PC-3 (cell line): ENCODE measurements at regions of chr21 and their contacts with region 1.

Region 1: GRCh38 chr21:44692798-44693512 is 4.0 kb upstream of the KRTAP10-12 start:
- DNase-seq: no peak
- ATAC-seq: no peak
- H3K4me3 ChIP-seq: no peak overlapping the region
- H3K27ac ChIP-seq: no peak overlapping the region
- H3K4me1 ChIP-seq: no peaks in the 10 kb centered on the region
- H3K27me3 ChIP-seq: no peaks in the 10 kb centered on the region
- CTCF ChIP-seq: no peak

Region 2: GRCh38 chr21:44596068-44596725 is 96.8 kb before region 1 on chr21:
- CTCF ChIA-PET with region 1: no interaction called
- POLR2A ChIA-PET with region 1: interaction called, 7 read pairs
- intact Hi-C with region 1: loop called (anchors 1 kb)
- DNase-seq: peak; percentile 88
- ATAC-seq: peak; percentile 99
- H3K4me3 ChIP-seq: 0 out of 2 replicates have a peak overlapping the region, but pooled peaks have one; percentile 16
- H3K27ac ChIP-seq: no peak overlapping the region
- H3K4me1 ChIP-seq: peaks cover 12% of the 10 kb centered on the region
- H3K27me3 ChIP-seq: no peaks in the 10 kb centered on the region
- CTCF ChIP-seq: no peak

Region 3: GRCh38 chr21:44637018-44637850 is 55.7 kb before region 1 on chr21 and contains the start of gene KRTAP10-10:
- CTCF ChIA-PET with region 1: no interaction called
- POLR2A ChIA-PET with region 1: no interaction called
- intact Hi-C with region 1: no loop called
- DNase-seq: no peak
- ATAC-seq: no peak
- H3K4me3 ChIP-seq: no peak within 1 kb of the TSS
- H3K27ac ChIP-seq: no peak within 1 kb of the TSS
- H3K4me1 ChIP-seq: no peaks in the 10 kb centered on the region
- H3K27me3 ChIP-seq: no peaks in the 10 kb centered on the region
- CTCF ChIP-seq: no peak
- total RNA-seq, gene KRTAP10-10: not detected in 2 replicates

Region 4: DNA sequence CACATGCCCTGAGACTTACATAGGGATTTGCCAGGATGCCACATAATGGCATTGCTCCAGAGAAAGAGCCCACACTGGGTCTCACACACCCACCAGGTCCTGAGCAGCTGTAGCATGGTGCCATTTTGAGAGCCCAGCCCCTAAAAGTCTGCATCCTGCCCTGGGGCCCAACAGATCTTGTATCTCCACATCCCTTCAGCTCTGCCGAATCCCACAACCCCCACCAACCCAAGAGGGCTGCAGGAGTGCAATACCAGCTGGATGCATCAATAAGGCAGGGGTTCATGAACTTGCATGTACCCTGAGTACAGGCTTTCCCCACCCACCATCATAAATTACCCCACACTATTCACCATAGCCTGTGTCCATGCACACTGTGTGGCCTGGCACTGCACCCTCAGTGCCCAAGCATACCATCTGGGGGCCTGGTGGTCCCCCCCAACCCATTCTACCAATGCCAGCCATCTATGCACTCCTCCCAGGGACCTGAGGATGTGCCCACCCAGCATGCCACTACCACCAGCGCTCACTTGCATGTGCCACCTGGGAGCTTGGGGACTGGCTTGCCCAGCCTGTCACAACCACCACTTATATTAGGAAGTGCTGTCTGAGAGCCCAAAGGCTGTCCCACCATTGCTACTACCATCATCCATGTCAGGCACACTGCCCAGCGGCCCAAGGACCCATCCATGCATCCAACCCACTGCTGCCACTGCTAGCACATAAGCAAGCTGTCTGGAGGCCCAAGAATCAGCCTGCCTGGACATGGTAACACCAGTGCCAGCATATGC is 22.1 kb before region 1 on chr21:
- CTCF ChIA-PET with region 1: no interaction called
- POLR2A ChIA-PET with region 1: no interaction called
- intact Hi-C with region 1: no loop called
- DNase-seq: no peak
- ATAC-seq: no peak
- H3K4me3 ChIP-seq: no peak overlapping the region
- H3K27ac ChIP-seq: no peak overlapping the region
- H3K4me1 ChIP-seq: peaks cover 11% of the 10 kb centered on the region; the same call in 1 of the 2 replicates
- H3K27me3 ChIP-seq: no peaks in the 10 kb centered on the region
- CTCF ChIP-seq: no peak